ENCODE measurements at regions of chr19 and their contacts with region 1.

Region 1: DNA sequence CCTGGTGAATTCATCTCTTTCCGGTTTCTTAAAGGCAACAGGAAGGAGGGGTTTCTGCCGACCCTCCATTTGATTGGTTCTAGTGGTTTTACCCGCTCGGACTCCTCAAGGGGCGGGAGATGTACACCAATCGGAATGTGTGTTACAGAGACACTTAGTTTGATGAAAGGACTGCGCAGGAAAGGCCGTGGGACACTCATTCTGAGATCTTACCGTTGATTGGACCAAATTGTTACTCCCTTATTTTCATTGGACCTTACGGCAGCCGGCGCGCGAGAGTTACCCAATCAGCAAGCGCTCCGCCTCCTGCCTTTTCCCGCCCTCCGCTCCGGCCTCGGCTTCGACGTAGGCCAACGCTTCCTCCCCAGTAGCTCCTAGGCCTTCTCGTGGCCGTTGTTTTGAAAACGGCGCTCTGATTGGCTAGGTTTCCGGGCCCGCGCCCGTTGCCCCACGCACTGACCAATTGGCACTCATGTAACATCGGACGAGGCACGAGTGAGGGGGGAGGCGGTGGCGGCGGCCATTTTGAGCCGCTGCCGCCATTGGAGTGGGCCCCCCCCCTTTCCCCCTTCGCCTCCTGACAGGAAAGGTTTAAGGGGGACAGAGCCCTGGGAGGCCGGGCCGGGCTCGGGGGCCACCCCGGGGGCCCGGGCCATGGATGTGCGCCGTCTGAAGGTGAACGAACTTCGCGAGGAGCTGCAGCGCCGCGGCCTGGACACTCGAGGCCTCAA is at the start of gene HNRNPUL1:
- DNase-seq: peak; percentile 99 to 100
- H3K4me3 ChIP-seq: peak within 1 kb of the TSS; percentile 89 to 93
- H3K27ac ChIP-seq: peak within 1 kb of the TSS; percentile 97 to 98
- H3K4me1 ChIP-seq: peaks cover 0 to 32% (median 30%) of the 10 kb centered on the region in 4 donors
- H3K27me3 ChIP-seq: no peaks in the 10 kb centered on the region
- CTCF ChIP-seq: peak; percentile 23 to 31

Region 2: DNA sequence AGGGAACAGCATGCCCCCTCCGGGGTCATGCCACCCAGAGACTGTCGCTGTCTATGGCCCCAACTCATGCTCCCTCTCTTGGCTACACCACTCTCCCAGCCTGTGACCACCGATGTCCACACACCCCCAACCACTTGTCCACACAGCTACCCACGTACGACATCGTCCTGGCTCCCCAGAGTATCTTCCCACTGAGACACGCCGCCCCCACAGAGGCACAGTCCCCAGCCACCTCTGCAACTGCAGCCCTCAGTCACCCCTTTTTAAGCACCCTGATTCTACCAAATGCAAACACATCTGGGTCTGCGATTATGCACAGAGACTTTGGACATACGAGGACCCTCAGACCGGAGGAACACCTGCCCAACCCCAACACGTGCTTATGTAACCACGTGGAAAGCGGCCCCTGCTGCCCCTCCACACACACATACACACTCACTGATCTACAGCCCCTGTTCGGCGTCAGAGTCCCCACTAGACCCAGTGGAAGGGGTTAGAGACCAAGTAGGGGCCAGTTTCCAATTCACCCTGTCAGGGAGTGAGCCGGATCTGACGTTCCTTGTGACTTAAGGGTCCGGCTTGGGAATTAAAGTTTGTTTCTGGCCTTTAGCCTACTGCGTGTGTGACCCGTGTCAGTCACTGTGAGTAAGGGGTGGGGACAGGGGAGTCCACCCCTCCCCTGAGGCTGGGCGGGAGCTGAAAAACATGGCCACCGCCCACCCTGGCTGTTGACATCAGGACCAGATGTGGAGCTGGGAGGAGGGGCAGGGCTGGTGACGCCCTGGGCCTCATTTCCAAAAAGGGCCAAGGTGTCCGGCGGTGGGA is 56.9 kb before region 1 on chr19:
- intact Hi-C with region 1: loop called (anchors 1 kb)
- DNase-seq: peak; percentile 93 to 97
- H3K4me3 ChIP-seq: peak overlapping the region; percentile 24 to 35
- H3K27ac ChIP-seq: peak overlapping the region; percentile 67 to 73
- H3K4me1 ChIP-seq: peaks cover 0 to 20% (median 11%) of the 10 kb centered on the region in 4 donors
- H3K27me3 ChIP-seq: no peaks in the 10 kb centered on the region
- CTCF ChIP-seq: no peak

Region 3: GRCh38 chr19:41226053-41226873 is 37.8 kb before region 1 on chr19:
- intact Hi-C with region 1: loop called (anchors 5 kb)
- DNase-seq: peak; percentile 68 to 92
- H3K4me3 ChIP-seq: peak overlapping the region; percentile 53 to 56
- H3K27ac ChIP-seq: peak overlapping the region; percentile 97 to 99
- H3K4me1 ChIP-seq: peaks cover 0 to 71% (median 42%) of the 10 kb centered on the region in 4 donors
- H3K27me3 ChIP-seq: no peaks in the 10 kb centered on the region
- CTCF ChIP-seq: no peak

Region 4: DNA sequence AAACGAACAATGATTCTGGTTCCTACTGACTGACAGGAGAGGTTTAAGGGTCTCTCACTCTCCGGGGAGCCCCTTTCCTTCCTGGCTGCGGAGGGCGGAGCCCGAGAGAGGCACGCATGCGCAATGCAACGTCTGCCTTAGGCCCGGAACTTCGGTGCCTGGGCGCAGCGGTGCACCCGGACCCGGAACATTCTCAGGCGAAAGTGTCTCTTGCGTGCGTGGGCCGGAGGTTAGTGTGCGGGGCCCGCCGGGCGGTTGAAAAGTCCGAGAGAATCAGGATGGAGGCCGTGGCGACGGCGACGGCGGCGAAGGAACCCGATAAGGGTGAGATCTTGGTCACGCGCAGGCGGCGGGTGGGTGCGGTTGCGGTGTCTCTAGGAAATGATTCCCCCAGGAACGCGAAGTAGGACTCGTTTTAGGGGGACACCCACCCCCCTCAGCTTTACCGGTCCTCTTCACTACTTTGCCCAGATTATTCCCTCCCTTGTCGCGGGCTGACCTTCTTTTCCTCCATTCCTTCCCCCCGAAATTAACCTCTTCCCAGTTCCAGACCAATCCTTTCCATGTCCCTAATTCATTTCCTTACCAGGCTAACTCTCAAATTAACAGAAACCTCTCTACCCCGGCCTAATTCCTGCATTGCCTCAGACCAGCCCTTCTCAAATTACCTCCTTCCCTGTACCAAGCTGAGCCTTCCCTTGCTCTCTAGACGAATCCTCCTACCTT is 46.2 kb after region 1 on chr19 and contains the start of gene CCDC97:
- intact Hi-C with region 1: loop called (anchors 5 kb)
- DNase-seq: peak; percentile 77 to 92
- H3K4me3 ChIP-seq: peak within 1 kb of the TSS; percentile 69 to 70
- H3K27ac ChIP-seq: peak within 1 kb of the TSS; percentile 88 to 91
- H3K4me1 ChIP-seq: peaks cover 4 to 40% (median 32%) of the 10 kb centered on the region in 4 donors
- H3K27me3 ChIP-seq: no peaks in the 10 kb centered on the region
- CTCF ChIP-seq: peak in 1 of 2 experiments; percentile 15